Cardiac septum (tissue), 1 donor: ENCODE measurements at regions of chr17 and their contacts with region 1.

Region 1: DNA sequence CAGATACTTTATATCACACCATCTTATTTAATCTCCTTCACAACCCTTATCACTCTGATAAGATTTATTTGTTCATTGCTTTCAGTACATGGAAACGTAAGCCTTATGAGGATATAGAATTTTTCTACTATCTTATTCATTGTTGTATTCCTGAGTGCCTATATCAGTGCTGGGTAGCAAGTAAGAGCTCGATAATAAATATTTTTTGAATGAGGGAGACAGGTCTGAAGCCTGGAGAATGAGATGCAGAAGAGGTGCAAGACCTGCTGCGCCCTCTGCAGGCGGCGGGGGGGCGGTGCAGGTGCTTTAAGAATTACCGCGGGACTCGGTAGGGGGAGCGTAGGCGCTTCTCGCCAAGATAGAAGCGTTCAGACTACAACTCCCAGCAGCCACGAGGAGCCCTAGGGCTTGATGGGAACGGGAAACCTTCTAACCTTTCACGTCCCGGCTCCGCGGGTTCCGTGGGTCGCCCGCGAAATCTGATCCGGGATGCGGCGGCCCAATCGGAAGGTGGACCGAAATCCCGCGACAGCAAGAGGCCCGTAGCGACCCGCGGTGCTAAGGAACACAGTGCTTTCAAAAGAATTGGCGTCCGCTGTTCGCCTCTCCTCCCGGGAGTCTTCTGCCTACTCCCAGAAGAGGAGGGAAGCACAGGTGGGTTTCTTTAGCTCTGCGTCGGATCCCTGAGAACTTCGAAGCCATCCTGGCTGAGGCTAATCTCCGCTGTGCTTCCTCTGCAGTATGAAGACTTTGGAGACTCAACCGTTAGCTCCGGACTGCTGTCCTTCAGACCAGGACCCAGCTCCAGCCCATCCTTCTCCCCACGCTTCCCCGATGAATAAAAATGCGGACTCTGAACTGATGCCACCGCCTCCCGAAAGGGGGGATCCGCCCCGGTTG is at the start of gene WRAP53:
- DNase-seq: peak; percentile 98
- total RNA-seq, gene WRAP53: 3.2 TPM

Region 2: DNA sequence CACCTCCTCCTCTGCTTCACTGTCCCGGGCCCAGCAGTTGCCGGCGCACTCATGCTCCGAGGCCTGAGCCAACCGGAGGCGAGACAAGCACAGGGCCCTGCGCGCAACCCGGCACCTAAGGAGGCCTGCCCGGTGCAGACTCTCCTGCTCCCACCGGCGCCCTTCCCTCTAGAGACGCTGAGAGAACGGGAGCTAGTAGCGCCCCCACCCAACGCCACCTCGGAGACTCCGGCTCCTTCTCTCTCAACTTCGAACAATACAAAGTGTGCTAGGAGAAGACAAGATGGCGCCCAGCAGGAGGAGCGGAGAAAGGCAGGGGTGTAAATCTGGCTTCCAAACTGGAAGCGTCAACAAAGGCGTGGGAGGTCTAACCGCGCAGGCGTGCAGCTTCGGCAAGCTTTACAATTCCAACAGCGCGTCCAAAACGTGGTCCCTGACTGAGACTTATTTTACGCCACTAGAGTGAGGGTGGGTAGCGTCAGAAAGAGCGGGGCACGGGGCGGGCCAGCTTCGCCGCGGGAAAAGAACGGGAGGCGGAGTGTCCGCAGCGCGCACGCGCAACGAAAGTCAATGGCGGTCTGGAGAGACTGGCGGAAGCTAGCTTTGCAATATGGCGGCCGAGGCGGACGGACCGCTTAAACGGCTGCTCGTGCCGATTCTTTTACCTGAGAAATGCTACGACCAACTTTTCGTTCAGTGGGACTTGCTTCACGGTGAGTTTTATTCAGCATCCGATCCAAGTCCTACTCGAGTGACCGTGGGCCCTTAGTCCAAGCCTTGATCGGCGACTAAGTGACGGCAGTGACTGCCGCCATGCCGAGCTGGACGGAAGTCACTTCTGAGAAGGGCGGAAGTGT is 104.7 kb before region 1 on chr17 and contains the start of gene MPDU1:
- intact Hi-C with region 1: loop called (anchors 2 kb)
- DNase-seq: peak; percentile 98
- total RNA-seq, gene MPDU1: 22.4 TPM

Region 3: GRCh38 chr17:7614422-7615264 is 73.5 kb before region 1 on chr17 and contains the start of gene FXR2:
- intact Hi-C with region 1: loop called (anchors 5 kb)
- DNase-seq: peak; percentile 100
- total RNA-seq, gene FXR2: 83.5 TPM

Region 4: DNA sequence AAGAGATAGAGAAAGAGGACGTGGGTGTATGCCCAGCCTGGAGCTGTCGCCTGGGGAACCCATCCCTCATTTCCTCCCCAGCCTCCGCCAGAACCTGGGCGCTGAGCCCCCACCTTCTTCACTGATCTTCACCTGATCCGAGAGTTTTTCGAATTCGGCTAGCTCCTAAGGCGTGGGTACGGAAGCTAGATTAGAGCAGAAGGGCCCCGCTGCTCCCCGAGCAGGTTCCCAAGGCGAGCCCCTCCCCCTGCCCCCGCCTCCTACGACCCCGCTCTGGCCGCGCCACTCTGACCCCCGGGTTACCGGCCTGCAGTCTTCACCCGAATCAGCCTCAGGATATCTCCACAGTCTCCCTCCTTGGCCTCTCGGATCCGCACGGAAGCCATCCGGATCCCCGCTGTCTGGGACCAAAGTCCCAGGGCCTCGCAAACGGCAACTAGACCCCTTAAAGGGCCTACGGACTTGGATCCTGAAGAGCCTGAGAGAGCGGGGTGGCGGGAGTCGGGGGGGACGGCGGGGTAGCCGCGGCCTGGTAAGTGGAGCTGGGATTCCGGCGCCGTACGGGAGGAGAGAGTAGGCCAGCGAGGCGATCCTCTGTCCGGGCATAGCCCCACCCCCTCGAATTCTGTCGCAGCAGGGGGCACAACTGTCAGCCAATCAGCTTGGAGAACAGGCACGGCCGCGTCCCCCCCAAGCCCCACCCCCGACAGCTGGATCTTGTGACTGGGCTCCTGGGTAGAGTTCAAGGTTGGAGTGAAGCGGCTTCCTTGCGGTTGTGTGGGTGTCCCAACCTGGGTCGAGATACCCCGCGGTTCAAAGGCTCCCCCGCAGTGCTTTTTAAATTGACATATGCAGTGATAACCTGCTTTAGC is 60.7 kb before region 1 on chr17 and contains the start of gene SAT2:
- intact Hi-C with region 1: loop called (anchors 2 kb)
- DNase-seq: peak; percentile 96
- total RNA-seq, gene SAT2: 60.3 TPM

Region 5: GRCh38 chr17:7716901-7717755 is 29.0 kb after region 1 on chr17 and contains the start of gene DNAH2:
- intact Hi-C with region 1: loop called (anchors 1 kb)
- DNase-seq: peak; percentile 83
- total RNA-seq, gene DNAH2: 0.16 TPM